ENCODE measurements at regions of chr3 and their contacts with region 1.

Region 1: DNA sequence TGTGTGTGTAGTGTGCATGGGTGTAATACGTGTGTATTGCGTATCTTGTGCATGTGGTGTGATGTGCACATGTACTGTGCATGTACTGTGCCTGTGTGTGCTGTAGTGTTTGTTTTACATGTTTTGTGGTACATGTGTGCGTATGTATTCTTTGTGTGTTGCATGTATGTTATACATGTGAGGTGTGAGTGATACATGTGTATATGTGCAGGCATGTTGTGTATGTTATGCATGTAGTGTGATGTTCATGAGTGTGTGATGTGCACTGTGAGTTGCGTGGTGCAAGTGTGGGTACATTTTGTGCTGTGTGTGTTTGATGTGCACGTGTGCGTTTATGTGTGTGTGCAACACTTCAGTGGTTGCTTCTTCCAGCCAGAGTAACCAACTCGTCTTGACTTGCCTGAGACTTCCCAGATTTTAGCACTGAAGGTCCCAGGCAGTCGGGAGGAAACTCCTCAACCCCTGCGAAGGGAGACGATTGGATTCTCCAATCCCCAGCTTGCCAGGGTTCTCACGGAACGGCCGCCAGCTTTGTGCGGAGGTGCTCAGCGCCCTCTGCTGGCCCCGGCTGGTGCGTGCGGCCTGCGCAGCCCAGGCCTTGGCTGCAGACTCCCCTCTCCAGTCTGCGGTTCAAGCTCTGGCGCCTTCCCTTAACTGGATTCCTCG is 3.6 kb downstream of the GALNT15 start:
- DNase-seq: peak; percentile 71 to 89 (median 85)
- H3K4me3 ChIP-seq: peak overlapping the region in 1 of 7 experiments; percentile 63
- H3K27ac ChIP-seq: no peak overlapping the region
- H3K4me1 ChIP-seq: peaks cover 0 to 4% (median 3%) of the 10 kb centered on the region in 4 experiments
- H3K27me3 ChIP-seq: no peaks in the 10 kb centered on the region

Region 2: DNA sequence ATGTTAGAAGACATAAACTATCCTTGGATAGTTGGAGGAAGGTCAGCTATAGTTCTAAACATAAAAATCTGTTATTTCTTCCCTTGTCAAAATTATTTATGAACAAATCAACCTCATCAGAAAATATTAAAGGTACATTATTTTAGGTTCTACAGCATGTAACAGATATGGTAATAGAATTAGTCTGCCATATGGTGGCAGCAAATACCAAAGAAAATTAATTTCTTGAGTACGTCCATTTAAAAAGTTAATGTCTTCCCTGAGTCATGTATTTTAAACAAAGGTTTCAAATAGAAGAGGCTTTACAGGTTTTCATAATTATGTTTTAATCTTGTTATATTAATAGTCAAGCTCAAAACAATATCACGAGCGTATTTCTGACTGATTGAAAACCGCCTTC is 362.4 kb before region 1 on chr3:
- CTCF ChIA-PET with region 1: interaction called, 11 read pairs
- POLR2A ChIA-PET with region 1: no interaction called
- DNase-seq: peak; percentile 78 to 87 (median 87)
- H3K4me3 ChIP-seq: no peak overlapping the region
- H3K27ac ChIP-seq: no peak overlapping the region
- H3K4me1 ChIP-seq: peaks cover 2 to 13% (median 9%) of the 10 kb centered on the region in 4 experiments
- H3K27me3 ChIP-seq: no peaks in the 10 kb centered on the region

Region 3: DNA sequence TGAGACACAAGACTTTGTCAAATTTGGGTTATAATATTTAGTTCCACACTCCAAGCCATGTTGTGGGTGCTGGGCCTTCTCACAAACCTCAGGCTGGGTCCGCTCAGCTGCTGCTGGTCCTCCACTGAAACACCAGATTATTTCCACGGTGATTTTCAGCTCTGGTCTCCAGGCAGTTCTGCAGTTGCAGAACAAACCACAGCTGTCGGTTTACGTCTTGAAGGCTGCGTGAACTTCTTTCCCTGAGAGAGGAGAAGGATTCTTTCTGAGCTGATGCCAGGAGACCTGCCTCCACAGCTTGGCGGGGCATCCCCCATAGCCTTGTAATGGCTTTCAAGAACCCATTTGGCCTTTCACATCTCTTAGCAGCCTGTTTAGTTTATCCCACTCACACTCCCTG is 12.6 kb after region 1 on chr3:
- CTCF ChIA-PET with region 1: interaction called, 16 read pairs
- POLR2A ChIA-PET with region 1: no interaction called
- DNase-seq: no peak
- H3K4me3 ChIP-seq: no peak overlapping the region
- H3K27ac ChIP-seq: no peak overlapping the region
- H3K4me1 ChIP-seq: no peaks in the 10 kb centered on the region
- H3K27me3 ChIP-seq: peaks cover 0 to 2% (median 0%) of the 10 kb centered on the region in 5 experiments